Uterus (tissue), 4 donors: ENCODE measurements at regions of chr10 and their contacts with region 1.

Region 1: DNA sequence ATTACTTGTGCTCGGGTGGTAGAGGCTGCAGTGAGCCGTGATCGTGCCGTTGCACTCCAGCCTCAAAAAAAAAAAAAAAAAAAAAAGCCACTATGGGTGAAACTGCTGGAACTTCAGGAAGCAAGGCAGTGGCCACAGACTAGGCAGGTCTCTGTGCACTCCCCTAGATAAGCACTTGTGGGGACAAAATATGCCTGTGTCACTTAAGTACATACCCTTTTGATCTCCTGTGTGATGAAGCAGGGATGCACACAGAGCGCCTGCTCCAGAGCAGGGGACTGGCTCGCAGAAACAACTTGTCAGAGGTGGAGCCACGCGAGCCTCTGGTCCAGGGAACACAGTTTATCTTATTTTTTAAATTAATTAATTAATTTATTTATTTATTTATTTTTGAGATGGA is 42.9 kb upstream of the PSAP start:
- DNase-seq: no peak
- H3K4me3 ChIP-seq: no peak overlapping the region
- H3K27ac ChIP-seq: no peak overlapping the region
- H3K4me1 ChIP-seq: peaks cover 3 to 4% of the 10 kb centered on the region in 2 donors
- H3K27me3 ChIP-seq: no peaks in the 10 kb centered on the region
- CTCF ChIP-seq: no peak
- POLR2A ChIP-seq: no peak

Region 2: DNA sequence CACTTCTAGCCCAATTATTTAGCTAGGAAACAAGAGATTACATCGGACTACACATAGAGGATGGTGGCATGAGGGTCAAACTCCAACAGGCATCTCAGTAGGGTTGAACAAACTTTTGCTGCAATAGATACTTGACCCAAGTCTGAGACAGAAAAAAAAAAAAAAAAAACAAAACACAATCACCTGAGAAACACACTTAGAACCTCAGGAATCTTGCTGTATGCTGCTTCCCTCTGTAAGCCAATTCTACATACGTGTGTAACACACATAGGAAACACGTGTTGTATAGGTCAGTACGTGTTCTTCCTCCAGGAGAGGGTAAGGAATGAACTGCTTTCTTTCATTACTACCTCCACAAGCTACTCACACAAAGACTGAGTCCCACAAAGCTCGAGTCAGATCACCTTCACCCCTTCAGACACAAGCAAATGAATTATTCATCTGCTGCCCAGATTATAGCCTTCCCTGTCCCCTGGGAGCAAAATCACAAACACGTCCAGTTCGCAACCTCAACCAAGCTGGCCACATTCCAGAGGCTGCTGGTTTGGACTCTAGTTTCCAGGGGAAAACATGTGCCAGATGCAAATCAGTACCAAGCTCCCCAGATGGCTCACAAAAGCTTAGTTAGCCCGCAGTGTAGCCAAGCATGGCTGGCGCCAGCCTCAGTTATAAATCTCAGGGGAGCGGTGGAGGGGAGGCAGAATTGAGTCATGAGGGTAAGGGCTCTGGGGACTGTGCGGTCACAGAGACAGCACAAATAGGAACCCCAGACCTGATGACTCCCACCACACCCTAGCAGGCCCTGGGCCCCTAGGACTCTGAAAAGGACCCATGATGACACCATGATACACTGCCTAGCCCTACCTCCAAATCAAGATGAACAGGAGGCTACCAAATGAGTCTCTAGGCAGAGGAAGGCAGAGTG is 58.0 kb before region 1 on chr10:
- intact Hi-C with region 1: loop called (anchors 10 kb)
- DNase-seq: peak; percentile 71 to 78
- H3K4me3 ChIP-seq: no peak overlapping the region
- H3K27ac ChIP-seq: peak overlapping the region; percentile 77 to 78
- H3K4me1 ChIP-seq: peaks cover 9 to 21% of the 10 kb centered on the region in 2 donors
- H3K27me3 ChIP-seq: no peaks in the 10 kb centered on the region
- CTCF ChIP-seq: no peak
- POLR2A ChIP-seq: no peak

Region 3: GRCh38 chr10:72048450-72049124 is 154.7 kb after region 1 on chr10:
- intact Hi-C with region 1: loop called (anchors 10 kb)
- DNase-seq: peak; percentile 94 to 95
- H3K4me3 ChIP-seq: no peak overlapping the region
- H3K27ac ChIP-seq: peak overlapping the region in 1 of 2 donors; percentile 31
- H3K4me1 ChIP-seq: no peaks in the 10 kb centered on the region
- H3K27me3 ChIP-seq: no peaks in the 10 kb centered on the region
- CTCF ChIP-seq: peak; percentile 97 to 100 (median 100)
- POLR2A ChIP-seq: no peak

Region 4: DNA sequence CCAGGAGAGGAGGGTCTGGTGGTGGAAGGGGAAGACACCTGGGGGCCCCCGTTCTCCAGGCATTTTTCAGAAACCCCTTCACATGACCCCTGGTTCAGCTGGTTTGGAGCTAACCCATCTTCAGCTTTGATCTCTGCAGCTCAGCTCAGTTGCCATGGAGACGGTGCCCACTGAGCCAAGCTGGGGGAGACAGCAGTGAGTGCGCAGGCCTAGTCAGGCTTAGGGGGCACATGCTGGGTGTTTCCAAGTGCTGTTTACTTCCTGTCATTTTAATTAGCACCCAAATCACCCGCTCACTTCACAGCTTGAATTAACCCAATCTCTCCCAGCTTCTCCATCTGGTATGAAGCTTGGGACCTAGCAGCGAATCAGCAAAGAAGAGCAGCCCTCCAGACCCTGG is 185.4 kb after region 1 on chr10:
- intact Hi-C with region 1: no loop called
- DNase-seq: no peak
- H3K4me3 ChIP-seq: no peak overlapping the region
- H3K27ac ChIP-seq: no peak overlapping the region
- H3K4me1 ChIP-seq: no peaks in the 10 kb centered on the region
- H3K27me3 ChIP-seq: no peaks in the 10 kb centered on the region
- CTCF ChIP-seq: no peak
- POLR2A ChIP-seq: no peak